CD4-positive, alpha-beta memory T cell (primary cell): ENCODE measurements at regions of chr1 and their contacts with region 1.

Region 1: DNA sequence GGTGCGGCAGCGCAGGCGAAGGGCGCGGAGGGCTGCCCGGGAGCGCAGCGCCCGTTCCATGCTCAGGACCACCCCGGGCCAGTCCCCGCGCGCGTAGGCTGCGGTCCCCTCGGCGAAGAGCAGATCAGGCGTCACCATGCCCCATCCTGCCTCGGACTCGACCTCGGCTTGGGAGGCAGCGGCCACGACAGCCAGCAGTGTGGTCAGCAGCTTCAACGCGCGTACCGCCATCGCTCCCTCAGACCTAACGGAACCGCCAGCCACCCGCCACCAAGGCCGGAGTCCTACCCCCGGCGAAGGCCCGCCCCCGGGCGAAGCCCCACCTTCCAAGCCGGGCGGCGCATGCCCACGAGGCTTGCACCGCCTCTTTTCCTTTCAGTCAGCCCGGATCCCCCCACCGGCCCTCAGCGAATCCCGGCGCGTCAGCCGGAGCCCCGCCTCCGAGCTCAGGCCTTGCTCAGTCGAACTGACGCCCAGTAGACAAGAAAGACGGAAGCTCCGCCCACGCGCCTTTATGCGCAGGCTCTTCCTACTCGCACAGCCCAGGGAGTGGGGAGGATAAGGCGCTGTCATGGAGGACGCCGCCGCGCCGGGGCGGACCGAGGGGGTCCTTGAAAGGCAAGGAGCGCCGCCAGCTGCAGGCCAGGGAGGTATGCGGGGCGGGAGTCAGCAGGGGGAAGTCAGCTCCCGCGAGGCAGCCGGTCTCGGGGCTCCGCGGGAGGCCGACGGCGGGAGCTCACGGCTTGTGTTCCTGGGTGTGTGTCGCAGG is at the starts of genes C1orf50 and P3H1:
- DNase-seq: peak; percentile 100
- H3K4me3 ChIP-seq: peak within 1 kb of the TSS; percentile 67 to 98
- H3K4me3 Mint-ChIP-seq: peak within 1 kb of the TSS in 1 of 8 donors; percentile 94
- H3K27ac ChIP-seq: peak within 1 kb of the TSS; percentile 85
- H3K27ac Mint-ChIP-seq: peak within 1 kb of the TSS; percentile 85 to 98 (median 93)
- H3K4me1 ChIP-seq: peaks cover 56% of the 10 kb centered on the region
- H3K4me1 Mint-ChIP-seq: peaks cover 18 to 45% (median 28%) of the 10 kb centered on the region in 4 donors
- H3K27me3 ChIP-seq: no peaks in the 10 kb centered on the region
- H3K27me3 Mint-ChIP-seq: no peaks in the 10 kb centered on the region
- total RNA-seq, gene C1orf50: 20.6 to 20.9 TPM
- total RNA-seq, gene P3H1: 52.5 to 56.6 TPM

Region 2: GRCh38 chr1:42462828-42463763 is 303.8 kb before region 1 on chr1 and contains the start of gene CCDC30:
- CTCF ChIA-PET with region 1: no interaction called
- POLR2A ChIA-PET with region 1: interaction called, 5 read pairs
- intact Hi-C with region 1: loop called (anchors 2 kb)
- DNase-seq: peak; percentile 97 to 99 (median 98)
- H3K4me3 ChIP-seq: peak within 1 kb of the TSS; percentile 44
- H3K4me3 Mint-ChIP-seq: peak within 1 kb of the TSS; percentile 84 to 94 (median 86)
- H3K27ac ChIP-seq: peak within 1 kb of the TSS; percentile 74
- H3K27ac Mint-ChIP-seq: peak within 1 kb of the TSS; percentile 93 to 98 (median 97)
- H3K4me1 ChIP-seq: peaks cover 24% of the 10 kb centered on the region
- H3K4me1 Mint-ChIP-seq: peaks cover 17 to 44% (median 27%) of the 10 kb centered on the region in 4 donors
- H3K27me3 ChIP-seq: no peaks in the 10 kb centered on the region
- H3K27me3 Mint-ChIP-seq: no peaks in the 10 kb centered on the region
- total RNA-seq, gene CCDC30: 7.0 to 7.1 TPM

Region 3: DNA sequence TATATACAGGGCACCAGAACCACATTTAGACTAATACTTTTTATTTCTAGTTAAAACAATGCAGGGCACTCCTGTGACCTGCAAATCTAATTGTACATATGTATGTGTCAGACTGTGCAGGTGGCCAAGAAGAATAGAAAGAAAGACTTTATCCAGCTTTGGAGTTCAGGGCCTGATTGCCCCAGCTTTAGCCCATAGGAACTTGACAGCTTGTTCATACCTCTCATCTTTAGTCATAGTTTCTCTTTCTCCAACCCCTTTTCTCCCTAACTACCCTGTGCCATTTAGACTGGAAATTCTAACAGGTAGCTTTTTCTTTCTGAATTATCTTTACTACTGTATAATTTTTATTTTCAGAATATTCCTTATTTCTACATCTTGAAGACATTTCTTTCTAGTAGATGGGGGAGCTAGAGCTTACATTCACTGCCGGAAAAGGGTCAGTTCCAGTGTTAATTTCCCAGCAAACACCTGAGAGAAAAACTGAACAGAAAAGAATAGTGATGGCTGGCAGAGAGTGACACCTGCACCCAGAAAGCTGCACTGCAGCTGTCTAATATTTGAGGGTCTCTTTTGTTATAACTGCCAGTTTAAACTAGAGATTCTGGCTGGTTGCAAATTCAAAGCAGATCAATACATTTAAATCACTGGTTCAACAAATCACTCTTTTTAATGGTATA is 76.3 kb before region 1 on chr1:
- CTCF ChIA-PET with region 1: no interaction called
- POLR2A ChIA-PET with region 1: no interaction called
- intact Hi-C with region 1: no loop called
- DNase-seq: no peak
- H3K4me3 ChIP-seq: no peak overlapping the region
- H3K4me3 Mint-ChIP-seq: peak overlapping the region in 6 of 8 donors; percentile 8 to 61 (median 42)
- H3K27ac ChIP-seq: no peak overlapping the region
- H3K27ac Mint-ChIP-seq: peak overlapping the region in 3 of 7 donors; percentile 5 to 53 (median 17)
- H3K4me1 ChIP-seq: peaks cover 83% of the 10 kb centered on the region
- H3K4me1 Mint-ChIP-seq: peaks cover 71 to 95% (median 86%) of the 10 kb centered on the region in 4 donors
- H3K27me3 ChIP-seq: no peaks in the 10 kb centered on the region
- H3K27me3 Mint-ChIP-seq: no peaks in the 10 kb centered on the region

Region 4: DNA sequence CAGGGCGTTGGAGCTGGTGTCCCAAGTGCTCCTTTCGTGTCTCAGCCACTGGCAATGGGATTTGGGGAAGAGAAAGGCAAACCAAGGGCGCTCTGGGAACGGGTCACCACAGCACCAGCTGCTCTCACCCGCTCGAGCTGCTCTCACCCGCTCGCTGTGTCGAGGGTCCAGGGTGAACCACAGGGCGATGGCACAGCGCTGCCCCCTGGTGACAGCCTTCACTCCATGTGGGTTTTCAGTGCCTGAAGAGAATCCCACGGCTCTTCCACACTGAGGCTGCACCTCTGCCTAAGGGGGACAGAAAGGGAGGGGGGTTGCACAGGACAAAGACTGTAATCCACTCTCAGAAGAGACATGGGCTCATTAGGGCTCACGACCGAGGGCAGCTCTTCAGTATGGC is 19.8 kb before region 1 on chr1:
- CTCF ChIA-PET with region 1: interaction called, 15 read pairs
- POLR2A ChIA-PET with region 1: no interaction called
- intact Hi-C with region 1: no loop called
- DNase-seq: peak in 4 of 5 donors; percentile 17 to 38 (median 33)
- H3K4me3 ChIP-seq: no peak overlapping the region
- H3K4me3 Mint-ChIP-seq: no peak overlapping the region
- H3K27ac ChIP-seq: no peak overlapping the region
- H3K27ac Mint-ChIP-seq: no peak overlapping the region
- H3K4me1 ChIP-seq: no peaks in the 10 kb centered on the region
- H3K4me1 Mint-ChIP-seq: no peaks in the 10 kb centered on the region
- H3K27me3 ChIP-seq: no peaks in the 10 kb centered on the region
- H3K27me3 Mint-ChIP-seq: no peaks in the 10 kb centered on the region

Region 5: GRCh38 chr1:42816585-42817434 is 49.9 kb after region 1 on chr1 and contains the starts of genes ERMAP and SVBP:
- CTCF ChIA-PET with region 1: interaction called, 18 read pairs
- POLR2A ChIA-PET with region 1: interaction called, 66 read pairs
- intact Hi-C with region 1: loop called (anchors 1 kb)
- DNase-seq: peak; percentile 88 to 97 (median 92)
- H3K4me3 ChIP-seq: peak within 1 kb of the TSS; percentile 43 to 74
- H3K4me3 Mint-ChIP-seq: peak within 1 kb of the TSS; percentile 82 to 93 (median 86)
- H3K27ac ChIP-seq: peak within 1 kb of the TSS; percentile 87
- H3K27ac Mint-ChIP-seq: peak within 1 kb of the TSS; percentile 86 to 96 (median 94)
- H3K4me1 ChIP-seq: peaks cover 17% of the 10 kb centered on the region
- H3K4me1 Mint-ChIP-seq: peaks cover 19 to 32% (median 27%) of the 10 kb centered on the region in 4 donors
- H3K27me3 ChIP-seq: no peaks in the 10 kb centered on the region
- H3K27me3 Mint-ChIP-seq: no peaks in the 10 kb centered on the region
- total RNA-seq, gene ERMAP: 6.5 to 8.6 TPM
- total RNA-seq, gene SVBP: 20.4 to 23.5 TPM

Region 6: DNA sequence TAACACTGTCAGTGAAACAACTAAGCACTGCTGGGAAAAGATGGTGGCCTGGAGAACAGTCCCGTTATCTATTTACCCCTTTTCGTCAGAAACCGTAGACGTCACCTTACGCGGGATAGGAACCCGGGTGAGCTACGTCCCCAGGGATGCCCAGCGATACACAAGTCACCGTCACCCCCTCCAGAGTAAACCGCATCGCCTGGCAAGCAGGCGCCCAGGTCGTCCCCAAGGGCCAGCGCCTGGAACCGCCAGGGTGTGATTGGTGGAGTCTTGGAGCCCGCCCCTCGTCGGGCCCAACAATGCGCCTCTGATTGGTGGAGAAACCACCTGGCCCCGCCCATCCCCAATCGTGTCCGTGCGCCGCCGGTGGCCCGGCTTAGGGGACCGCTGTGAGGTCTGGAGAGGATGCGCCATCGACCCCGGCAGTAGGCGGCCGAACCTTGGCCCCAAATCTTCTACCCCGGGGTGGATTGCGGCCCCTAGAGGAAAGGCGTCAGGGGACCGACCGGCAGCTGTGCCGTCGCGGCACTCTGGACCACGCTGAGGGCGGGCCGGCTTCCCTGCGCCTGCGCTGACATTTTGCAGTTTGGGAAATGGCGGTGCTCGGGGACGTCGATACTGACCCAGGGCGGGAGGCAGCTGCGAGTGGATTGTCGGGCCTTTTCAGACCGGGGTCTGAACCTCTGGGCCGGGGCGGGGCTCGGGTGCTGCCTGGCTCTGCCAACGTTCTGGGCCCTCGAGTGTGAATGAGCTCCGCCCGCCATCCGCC is 157.3 kb after region 1 on chr1:
- CTCF ChIA-PET with region 1: interaction called, 3 read pairs
- POLR2A ChIA-PET with region 1: interaction called, 14 read pairs
- intact Hi-C with region 1: loop called (anchors 2 kb)
- DNase-seq: peak; percentile 89 to 94 (median 90)
- H3K4me3 ChIP-seq: peak overlapping the region; percentile 83 to 85
- H3K4me3 Mint-ChIP-seq: peak overlapping the region; percentile 82 to 97 (median 94)
- H3K27ac ChIP-seq: peak overlapping the region; percentile 72
- H3K27ac Mint-ChIP-seq: peak overlapping the region; percentile 89 to 98 (median 95)
- H3K4me1 ChIP-seq: peaks cover 19% of the 10 kb centered on the region
- H3K4me1 Mint-ChIP-seq: peaks cover 27 to 45% (median 35%) of the 10 kb centered on the region in 4 donors
- H3K27me3 ChIP-seq: no peaks in the 10 kb centered on the region
- H3K27me3 Mint-ChIP-seq: no peaks in the 10 kb centered on the region

Region 7: GRCh38 chr1:43171876-43172526 is 405.1 kb after region 1 on chr1 and contains the starts of genes CFAP57 and EBNA1BP2:
- CTCF ChIA-PET with region 1: no interaction called
- POLR2A ChIA-PET with region 1: no interaction called
- intact Hi-C with region 1: loop called (anchors 5 kb)
- DNase-seq: peak; percentile 93 to 95 (median 94)
- H3K4me3 ChIP-seq: peak within 1 kb of the TSS; percentile 81 to 87
- H3K4me3 Mint-ChIP-seq: peak within 1 kb of the TSS; percentile 94 to 100 (median 99)
- H3K27ac ChIP-seq: peak within 1 kb of the TSS; percentile 62
- H3K27ac Mint-ChIP-seq: peak within 1 kb of the TSS; percentile 84 to 99 (median 96)
- H3K4me1 ChIP-seq: peaks cover 21% of the 10 kb centered on the region
- H3K4me1 Mint-ChIP-seq: peaks cover 22 to 31% (median 26%) of the 10 kb centered on the region in 4 donors
- H3K27me3 ChIP-seq: peaks cover 10% of the 10 kb centered on the region
- H3K27me3 Mint-ChIP-seq: peaks cover 13 to 15% of the 10 kb centered on the region in 2 donors
- total RNA-seq, gene CFAP57: not detected
- total RNA-seq, gene EBNA1BP2: 23.6 to 27.6 TPM